ENCODE measurements at regions of chr18 and their contacts with region 1.

Region 1: GRCh38 chr18:50009773-50010335 is 185.1 kb downstream of the MYO5B start:
- DNase-seq: no peak
- ATAC-seq: peak; percentile 53 to 64

Region 2: DNA sequence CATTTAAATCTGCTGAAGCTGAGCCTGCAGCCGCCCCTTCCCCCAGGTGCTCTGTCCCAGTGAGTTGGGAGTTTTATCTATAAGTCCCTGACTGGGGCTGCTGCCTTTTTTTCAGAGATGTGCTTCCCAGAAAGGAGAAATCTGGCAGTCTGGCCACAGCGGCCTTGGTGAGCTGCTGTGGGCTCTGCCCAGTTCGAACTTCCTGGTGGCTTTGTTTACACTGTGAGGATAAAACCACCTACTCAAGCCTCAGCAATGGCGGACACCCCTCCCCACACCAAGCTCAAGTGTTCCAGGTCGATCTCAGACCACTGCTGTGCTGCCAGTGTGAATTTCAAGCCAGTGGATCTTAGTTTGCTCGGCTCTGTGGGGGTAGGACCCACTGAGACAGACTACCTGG is 293.8 kb before region 1 on chr18:
- intact Hi-C with region 1: no loop called
- DNase-seq: no peak
- ATAC-seq: no peak

Region 3: GRCh38 chr18:50061876-50062517 is 52.1 kb after region 1 on chr18:
- intact Hi-C with region 1: loop called in 1 of 2 experiments (anchors 10 kb)
- DNase-seq: peak; percentile 54
- ATAC-seq: peak; percentile 78

Region 4: GRCh38 chr18:50194631-50195532 is 185.0 kb after region 1 on chr18 and contains the start of gene MYO5B:
- intact Hi-C with region 1: loop called (anchors 10 kb)
- DNase-seq: peak; percentile 46
- ATAC-seq: peak; percentile 89 to 90
- total RNA-seq, gene MYO5B: 4.6 to 7.2 TPM

Measured in left cardiac atrium (tissue), 4 donors.